ENCODE measurements at regions of chr4 and their contacts with region 1.

Region 1: DNA sequence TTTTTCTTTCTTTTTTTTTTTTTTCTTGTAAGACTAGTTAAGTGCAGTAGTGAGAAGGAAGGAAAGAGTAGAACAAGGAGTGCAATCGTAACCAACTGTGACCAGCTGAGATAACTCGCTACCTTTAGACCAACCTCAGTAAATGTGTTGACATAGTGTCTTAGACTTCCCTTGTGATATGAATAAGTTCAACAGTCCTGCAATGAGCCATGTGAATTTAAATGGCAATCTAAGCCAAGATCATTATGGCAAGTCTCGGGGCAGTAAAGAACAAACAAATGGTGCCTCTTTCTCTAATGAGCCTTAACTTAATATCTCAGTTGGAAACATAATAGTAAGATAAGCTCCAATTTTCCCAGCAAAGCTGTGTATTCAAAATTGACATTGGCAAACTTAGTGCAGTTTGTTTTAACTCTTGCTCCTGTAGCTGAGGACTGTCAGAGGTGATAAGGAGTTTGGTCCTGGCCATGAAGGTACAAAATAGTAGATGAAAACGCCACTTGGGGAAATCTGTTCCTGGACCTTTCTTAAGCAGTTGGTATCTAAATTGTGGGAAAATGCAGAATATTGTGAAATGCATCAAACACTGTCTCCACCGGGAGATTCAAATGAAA is 13.8 kb upstream of the RELL1 start:
- DNase-seq: no peak
- H3K4me3 ChIP-seq: no peak overlapping the region
- H3K27ac ChIP-seq: no peak overlapping the region
- H3K4me1 ChIP-seq: no peaks in the 10 kb centered on the region
- H3K27me3 ChIP-seq: no peaks in the 10 kb centered on the region
- CTCF ChIP-seq: no peak

Region 2: DNA sequence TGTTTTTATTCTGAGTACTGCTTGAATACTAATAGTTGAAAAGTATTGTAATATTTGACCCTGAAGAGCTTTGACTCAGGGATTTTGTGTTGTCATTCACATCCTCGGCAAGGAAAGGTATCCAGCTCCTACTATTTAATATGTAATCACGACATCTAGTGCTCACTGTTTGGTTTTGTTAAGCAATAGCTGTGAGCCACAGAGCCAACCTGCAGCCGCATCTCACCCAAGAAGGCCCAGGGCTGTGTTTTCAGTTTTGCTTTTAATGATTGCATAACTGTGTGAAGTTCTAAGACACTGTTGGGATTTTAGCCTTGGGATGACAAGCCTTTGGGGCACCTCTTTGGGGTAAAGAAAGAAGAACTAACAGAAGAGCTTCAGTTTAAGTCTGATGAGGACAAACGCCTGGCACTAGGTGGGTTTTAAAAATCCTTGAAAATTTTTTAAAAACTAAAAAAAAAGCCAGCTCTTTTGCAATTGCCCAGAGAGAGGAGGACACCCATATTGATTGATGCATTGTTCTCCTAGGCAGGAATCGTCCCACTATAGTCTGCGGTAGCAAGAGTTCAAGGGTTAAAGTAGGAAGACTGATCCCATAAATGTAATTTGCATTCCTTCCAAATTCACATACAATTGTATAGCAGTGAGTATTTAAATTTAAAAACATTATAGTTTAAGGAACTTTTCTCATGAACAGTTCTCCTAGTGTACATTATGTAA is 171.6 kb before region 1 on chr4:
- intact Hi-C with region 1: no loop called
- DNase-seq: no peak
- H3K4me3 ChIP-seq: no peak overlapping the region
- H3K27ac ChIP-seq: no peak overlapping the region
- H3K4me1 ChIP-seq: no peaks in the 10 kb centered on the region
- H3K27me3 ChIP-seq: no peaks in the 10 kb centered on the region
- CTCF ChIP-seq: no peak

Region 3: DNA sequence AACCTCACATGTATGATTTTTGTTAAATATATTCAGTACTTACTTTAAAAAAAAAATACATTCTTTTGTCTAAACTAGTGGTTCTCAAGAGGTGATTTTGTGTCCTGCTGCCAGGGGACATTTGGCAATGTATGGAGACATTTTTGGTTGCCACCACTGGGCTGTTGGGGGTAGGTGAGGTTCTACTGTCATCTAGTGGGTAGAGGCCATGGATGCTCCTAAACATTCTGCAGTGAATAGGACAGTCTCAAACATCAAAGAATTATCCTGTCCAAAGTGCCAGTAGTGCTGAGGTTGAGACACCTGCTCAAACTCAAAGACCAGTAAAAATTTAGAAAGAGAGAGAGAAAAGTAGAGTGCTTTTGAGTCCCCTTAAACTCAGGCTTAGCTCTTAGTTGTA is 93.6 kb after region 1 on chr4:
- intact Hi-C with region 1: loop called (anchors 10 kb)
- DNase-seq: no peak
- H3K4me3 ChIP-seq: no peak overlapping the region
- H3K27ac ChIP-seq: no peak overlapping the region
- H3K4me1 ChIP-seq: no peaks in the 10 kb centered on the region
- H3K27me3 ChIP-seq: peaks cover 13% of the 10 kb centered on the region
- CTCF ChIP-seq: peak; percentile 78

Measured in left ventricle myocardium inferior (tissue), 1 donor.